ENCODE measurements at regions of chr9 and their contacts with region 1.

Region 1: DNA sequence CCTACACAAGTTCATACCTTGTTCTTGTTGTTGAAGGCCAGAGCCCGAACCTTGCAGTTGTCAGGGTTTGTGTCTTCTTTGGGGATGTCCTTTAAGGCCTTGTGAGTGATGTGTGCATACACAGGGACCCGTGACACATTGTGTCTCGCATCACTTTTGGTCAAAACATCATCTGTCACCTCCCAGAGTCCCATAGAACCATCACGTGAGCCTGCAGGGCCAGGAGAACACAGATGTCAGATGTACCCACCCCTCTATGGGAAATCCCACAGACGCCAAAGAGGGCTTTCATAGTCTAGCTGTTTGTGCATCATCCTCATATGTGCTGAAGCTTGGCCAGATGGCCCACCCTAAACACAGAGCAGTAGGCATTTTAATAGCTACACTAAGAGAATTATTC is 28.2 kb downstream of the DCAF12 start:
- DNase-seq: no peak
- H3K4me3 ChIP-seq: no peak overlapping the region
- H3K27ac ChIP-seq: no peak overlapping the region
- H3K4me1 ChIP-seq: no peaks in the 10 kb centered on the region
- H3K27me3 ChIP-seq: no peaks in the 10 kb centered on the region
- CTCF ChIP-seq: no peak

Region 2: DNA sequence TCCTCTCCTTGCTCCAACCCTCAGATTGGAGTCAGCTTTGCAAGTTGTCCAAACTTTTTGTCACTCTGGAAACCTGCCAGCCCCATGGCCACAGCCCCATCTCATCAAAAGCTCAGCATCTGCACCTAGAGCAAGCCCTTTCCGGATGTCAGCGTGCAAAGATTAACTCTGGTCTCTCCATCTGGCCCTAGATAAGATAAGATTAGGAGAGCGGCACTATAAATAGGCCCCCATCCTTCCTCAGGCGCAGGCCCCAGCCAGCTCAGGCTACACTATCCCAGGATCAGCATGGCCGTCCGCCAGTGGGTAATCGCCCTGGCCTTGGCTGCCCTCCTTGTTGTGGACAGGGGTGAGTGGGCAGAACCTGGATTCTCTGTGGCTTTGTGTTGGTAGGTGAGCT is 858.4 kb before region 1 on chr9 and contains the start of gene SPINK4:
- CTCF ChIA-PET with region 1: no interaction called
- dilution Hi-C with region 1: no loop called
- in situ Hi-C with region 1: no loop called
- intact Hi-C with region 1: no loop called
- DNase-seq: no peak
- H3K4me3 ChIP-seq: no peak within 1 kb of the TSS
- H3K27ac ChIP-seq: no peak within 1 kb of the TSS
- H3K4me1 ChIP-seq: peaks cover 3% of the 10 kb centered on the region
- H3K27me3 ChIP-seq: no peaks in the 10 kb centered on the region
- CTCF ChIP-seq: no peak
- total RNA-seq, gene SPINK4: not detected

Region 3: DNA sequence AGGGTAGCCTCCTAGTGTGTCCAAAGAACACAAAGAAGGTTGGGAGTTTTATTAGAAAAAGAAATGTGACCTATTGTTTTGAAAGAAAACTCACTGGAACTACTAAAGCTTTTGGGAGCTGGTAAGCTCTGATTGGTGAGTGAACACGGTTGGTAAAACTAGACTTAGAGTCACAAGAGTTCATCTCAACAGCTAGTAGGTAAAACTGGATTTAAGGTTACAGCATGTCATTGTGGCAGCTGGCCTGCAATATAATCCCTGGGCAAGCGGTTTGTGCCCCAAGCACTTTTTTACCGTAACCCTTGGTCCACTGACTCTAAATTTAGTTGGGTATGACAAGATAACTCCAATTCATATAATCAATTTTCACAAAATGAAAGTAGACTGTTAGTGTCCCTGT is 97.0 kb before region 1 on chr9:
- CTCF ChIA-PET with region 1: no interaction called
- dilution Hi-C with region 1: loop called (anchors 5 kb)
- in situ Hi-C with region 1: no loop called
- intact Hi-C with region 1: no loop called
- DNase-seq: no peak
- H3K4me3 ChIP-seq: no peak overlapping the region
- H3K27ac ChIP-seq: no peak overlapping the region
- H3K4me1 ChIP-seq: no peaks in the 10 kb centered on the region
- H3K27me3 ChIP-seq: no peaks in the 10 kb centered on the region
- CTCF ChIP-seq: no peak

Region 4: DNA sequence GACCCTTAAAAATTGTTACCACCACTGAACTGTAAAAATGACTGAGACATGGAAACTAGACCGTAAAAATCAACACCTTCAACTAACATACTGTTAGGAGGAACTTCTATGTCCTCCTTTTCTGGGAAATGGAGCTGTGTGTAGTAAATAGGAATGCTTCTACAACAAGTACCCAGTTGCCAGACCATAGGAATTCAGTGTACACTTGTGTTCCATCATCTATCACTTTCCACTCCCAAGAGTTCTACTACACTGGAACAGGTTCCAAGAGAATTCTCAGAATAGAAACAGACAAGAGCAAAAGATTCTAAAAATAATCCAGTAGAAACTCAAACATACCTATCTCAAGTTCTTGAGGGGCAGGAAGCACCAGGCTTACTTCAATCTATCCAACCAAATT is 73.2 kb before region 1 on chr9:
- CTCF ChIA-PET with region 1: no interaction called
- dilution Hi-C with region 1: loop called (anchors 5 kb)
- in situ Hi-C with region 1: no loop called
- intact Hi-C with region 1: no loop called
- DNase-seq: no peak
- H3K4me3 ChIP-seq: no peak overlapping the region
- H3K27ac ChIP-seq: no peak overlapping the region
- H3K4me1 ChIP-seq: no peaks in the 10 kb centered on the region
- H3K27me3 ChIP-seq: no peaks in the 10 kb centered on the region
- CTCF ChIP-seq: no peak

Region 5: GRCh38 chr9:34035656-34036055 is 62.7 kb before region 1 on chr9:
- CTCF ChIA-PET with region 1: no interaction called
- dilution Hi-C with region 1: no loop called
- in situ Hi-C with region 1: no loop called
- intact Hi-C with region 1: no loop called
- DNase-seq: no peak
- H3K4me3 ChIP-seq: no peak overlapping the region
- H3K27ac ChIP-seq: no peak overlapping the region
- H3K4me1 ChIP-seq: peaks cover 3% of the 10 kb centered on the region
- H3K27me3 ChIP-seq: no peaks in the 10 kb centered on the region
- CTCF ChIP-seq: no peak

Region 6: GRCh38 chr9:34190996-34191892 is 92.9 kb after region 1 on chr9:
- CTCF ChIA-PET with region 1: no interaction called
- dilution Hi-C with region 1: loop called (anchors 5 kb)
- in situ Hi-C with region 1: no loop called
- intact Hi-C with region 1: no loop called
- DNase-seq: no peak
- H3K4me3 ChIP-seq: no peak overlapping the region
- H3K27ac ChIP-seq: no peak overlapping the region
- H3K4me1 ChIP-seq: peaks cover 11% of the 10 kb centered on the region
- H3K27me3 ChIP-seq: no peaks in the 10 kb centered on the region
- CTCF ChIP-seq: peak in 1 of 2 donors; percentile 39

Region 7: GRCh38 chr9:34267660-34268059 is 169.4 kb after region 1 on chr9:
- CTCF ChIA-PET with region 1: no interaction called
- dilution Hi-C with region 1: loop called (anchors 10 kb)
- in situ Hi-C with region 1: no loop called
- intact Hi-C with region 1: no loop called
- DNase-seq: no peak
- H3K4me3 ChIP-seq: no peak overlapping the region
- H3K27ac ChIP-seq: no peak overlapping the region
- H3K4me1 ChIP-seq: no peaks in the 10 kb centered on the region
- H3K27me3 ChIP-seq: no peaks in the 10 kb centered on the region
- CTCF ChIP-seq: no peak

Region 8: DNA sequence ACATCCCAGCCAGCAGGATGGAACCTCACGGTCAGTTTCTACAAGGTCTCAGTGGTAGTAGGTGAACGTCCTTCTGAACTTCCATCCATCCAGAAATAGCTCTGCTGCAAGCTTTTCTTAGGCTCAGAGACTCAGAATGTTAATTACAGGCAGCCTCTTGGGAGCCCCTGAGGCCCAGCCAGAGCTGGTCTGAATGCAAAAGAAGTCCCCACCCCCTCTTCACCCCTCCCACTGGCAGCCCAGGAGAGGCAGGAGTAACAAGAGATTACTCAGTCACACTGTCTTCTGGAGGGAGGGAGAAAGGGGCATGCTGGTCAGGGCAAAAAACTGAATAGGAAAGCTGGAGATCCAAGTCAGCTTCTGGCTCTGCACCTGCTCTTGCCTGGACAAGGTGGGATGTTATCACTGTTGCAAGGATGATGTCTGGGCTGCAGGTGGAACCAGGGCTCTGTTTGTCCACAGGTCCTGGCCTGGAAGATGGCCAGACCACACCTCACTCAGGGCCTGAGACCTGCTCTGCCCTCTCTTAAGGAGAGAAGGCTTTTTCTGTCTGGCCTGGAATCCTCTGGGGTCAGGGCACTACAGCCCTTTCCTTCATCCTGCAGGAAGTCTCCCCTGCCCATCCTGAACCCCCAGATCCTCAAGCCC is 415.4 kb after region 1 on chr9:
- CTCF ChIA-PET with region 1: no interaction called
- dilution Hi-C with region 1: loop called (anchors 10 kb)
- in situ Hi-C with region 1: no loop called
- intact Hi-C with region 1: no loop called
- DNase-seq: no peak
- H3K4me3 ChIP-seq: no peak overlapping the region
- H3K27ac ChIP-seq: no peak overlapping the region
- H3K4me1 ChIP-seq: no peaks in the 10 kb centered on the region
- H3K27me3 ChIP-seq: no peaks in the 10 kb centered on the region
- CTCF ChIP-seq: no peak

Region 9: DNA sequence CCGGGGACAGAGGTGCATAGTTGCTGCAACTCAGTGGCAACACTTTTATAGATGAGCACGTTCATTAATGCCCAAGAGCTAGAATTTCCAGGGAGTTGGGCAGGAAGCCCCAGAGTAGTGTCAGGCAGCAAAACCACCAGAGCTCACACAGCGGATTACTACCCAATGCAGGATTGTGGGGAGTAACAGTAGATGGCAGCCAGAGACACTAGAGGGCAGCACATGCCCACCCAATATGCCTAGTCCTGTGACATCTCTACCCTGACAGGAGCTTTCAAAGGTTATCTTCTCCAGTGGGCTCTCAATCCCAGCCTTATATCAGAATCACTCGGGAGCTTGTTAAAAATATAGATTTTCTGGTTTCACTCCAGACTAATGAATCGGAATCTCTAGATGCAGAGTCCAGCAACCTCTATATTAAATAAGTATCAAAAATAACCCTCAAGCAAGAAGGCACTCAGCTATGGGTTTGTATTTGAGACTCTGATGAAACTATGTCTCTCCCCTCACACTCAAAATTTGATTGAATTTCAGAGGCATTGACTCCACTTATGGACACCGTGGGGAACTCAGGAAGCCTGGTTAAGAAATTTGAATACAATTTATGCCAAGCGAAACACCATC is 801.3 kb after region 1 on chr9:
- CTCF ChIA-PET with region 1: no interaction called
- dilution Hi-C with region 1: no loop called
- in situ Hi-C with region 1: no loop called
- intact Hi-C with region 1: no loop called
- DNase-seq: peak; percentile 60
- H3K4me3 ChIP-seq: no peak overlapping the region
- H3K27ac ChIP-seq: no peak overlapping the region
- H3K4me1 ChIP-seq: no peaks in the 10 kb centered on the region
- H3K27me3 ChIP-seq: peaks cover 2% of the 10 kb centered on the region
- CTCF ChIP-seq: peak; percentile 74 to 89